WTC11 (cell line): ENCODE measurements at regions of chr2 and their contacts with region 1.

Region 1: DNA sequence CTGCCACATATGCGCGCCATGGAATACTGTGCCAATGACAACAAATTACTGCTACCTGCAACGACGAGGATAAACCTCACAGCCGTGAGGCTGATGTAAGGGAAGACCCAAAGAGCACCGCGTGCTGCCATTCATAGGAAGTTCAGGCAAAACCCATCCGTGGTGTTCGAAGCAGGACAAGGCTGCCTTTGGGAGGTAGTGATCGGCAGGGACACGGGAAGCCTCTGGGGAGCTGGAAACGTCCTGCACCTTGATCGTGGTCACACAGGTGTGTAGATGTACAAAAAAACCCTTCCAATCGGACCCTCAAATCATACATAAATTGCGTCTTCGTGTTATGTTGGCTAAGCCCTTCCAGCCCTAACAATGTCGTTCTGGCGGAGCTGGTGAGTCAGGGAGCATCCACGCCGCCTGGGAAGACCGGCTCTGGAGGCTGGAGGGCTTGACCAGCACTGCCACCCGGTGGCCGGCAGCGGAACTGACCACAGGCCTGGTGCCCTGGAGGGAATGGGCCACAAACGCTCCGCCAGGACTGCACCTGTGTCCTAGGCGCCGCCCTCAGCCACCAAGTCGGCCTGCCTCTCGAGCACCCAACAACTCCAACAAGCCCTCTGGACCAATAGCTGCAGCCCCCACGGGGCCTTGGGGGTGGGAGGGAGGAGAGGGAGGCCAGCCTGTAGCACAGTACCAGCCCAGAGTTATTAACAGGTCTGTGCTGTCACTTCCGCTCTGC is 4.1 kb upstream of the NEURL3 start:
- DNase-seq: peak; percentile 97
- ATAC-seq: peak; percentile 86
- H3K4me3 Mint-ChIP-seq: peak overlapping the region; percentile 55
- H3K27ac Mint-ChIP-seq: no peak overlapping the region
- H3K4me1 Mint-ChIP-seq: peaks cover 10% of the 10 kb centered on the region
- H3K27me3 Mint-ChIP-seq: peaks cover 33% of the 10 kb centered on the region
- CTCF ChIP-seq: peak; percentile 93; the same call in 1 of the 2 replicates

Region 2: GRCh38 chr2:96320728-96321622 is 188.3 kb before region 1 on chr2:
- CTCF ChIA-PET with region 1: interaction called, 18 read pairs
- POLR2A ChIA-PET with region 1: no interaction called
- DNase-seq: peak; percentile 55
- ATAC-seq: peak; percentile 43
- H3K4me3 Mint-ChIP-seq: peak overlapping the region; percentile 90
- H3K27ac Mint-ChIP-seq: no peak overlapping the region
- H3K4me1 Mint-ChIP-seq: peaks cover 23% of the 10 kb centered on the region
- H3K27me3 Mint-ChIP-seq: peaks cover 68% of the 10 kb centered on the region
- CTCF ChIP-seq: no peak

Region 3: GRCh38 chr2:96413323-96413722 is 96.0 kb before region 1 on chr2:
- CTCF ChIA-PET with region 1: interaction called, 127 read pairs
- POLR2A ChIA-PET with region 1: interaction called, 3 read pairs
- DNase-seq: no peak
- ATAC-seq: no peak
- H3K4me3 Mint-ChIP-seq: no peak overlapping the region
- H3K27ac Mint-ChIP-seq: no peak overlapping the region
- H3K4me1 Mint-ChIP-seq: peaks cover 34% of the 10 kb centered on the region
- H3K27me3 Mint-ChIP-seq: peaks cover 4% of the 10 kb centered on the region; the same call in 1 of the 2 replicates
- CTCF ChIP-seq: no peak

Region 4: GRCh38 chr2:96493072-96493471 is 16.2 kb before region 1 on chr2:
- CTCF ChIA-PET with region 1: interaction called, 28 read pairs
- POLR2A ChIA-PET with region 1: interaction called, 3 read pairs
- DNase-seq: peak; percentile 44
- ATAC-seq: peak; percentile 72
- H3K4me3 Mint-ChIP-seq: no peak overlapping the region
- H3K27ac Mint-ChIP-seq: no peak overlapping the region
- H3K4me1 Mint-ChIP-seq: peaks cover 1% of the 10 kb centered on the region; the same call in 1 of the 2 replicates
- H3K27me3 Mint-ChIP-seq: peaks cover 4% of the 10 kb centered on the region; the same call in 1 of the 2 replicates
- CTCF ChIP-seq: no peak

Region 5: GRCh38 chr2:96536445-96537065 is 27.3 kb after region 1 on chr2 and contains the start of gene ARID5A:
- CTCF ChIA-PET with region 1: interaction called, 18 read pairs
- POLR2A ChIA-PET with region 1: interaction called, 3 read pairs
- DNase-seq: peak; percentile 96
- ATAC-seq: peak; percentile 76
- H3K4me3 Mint-ChIP-seq: peak within 1 kb of the TSS; percentile 82
- H3K27ac Mint-ChIP-seq: no peak within 1 kb of the TSS
- H3K4me1 Mint-ChIP-seq: peaks cover 58% of the 10 kb centered on the region
- H3K27me3 Mint-ChIP-seq: peaks cover 19% of the 10 kb centered on the region
- CTCF ChIP-seq: no peak
- total RNA-seq, gene ARID5A: 8.5 to 13.9 TPM (median 10.1 TPM) in 3 replicates

Region 6: GRCh38 chr2:96575785-96576456 is 66.6 kb after region 1 on chr2:
- CTCF ChIA-PET with region 1: no interaction called
- POLR2A ChIA-PET with region 1: no interaction called
- DNase-seq: no peak
- ATAC-seq: no peak
- H3K4me3 Mint-ChIP-seq: no peak overlapping the region
- H3K27ac Mint-ChIP-seq: no peak overlapping the region
- H3K4me1 Mint-ChIP-seq: no peaks in the 10 kb centered on the region
- H3K27me3 Mint-ChIP-seq: no peaks in the 10 kb centered on the region
- CTCF ChIP-seq: no peak